HEK293 (cell line): ENCODE measurements at regions of chr15 and their contacts with region 1.

Region 1: GRCh38 chr15:79596051-79596507 is 163.9 kb downstream of the MINAR1 start:
- H3K4me3 ChIP-seq: no peak overlapping the region
- H3K27ac ChIP-seq: no peak overlapping the region
- H3K4me1 ChIP-seq: no peaks in the 10 kb centered on the region
- CTCF ChIP-seq: peak; percentile 84

Region 2: GRCh38 chr15:79364571-79365240 is 231.4 kb before region 1 on chr15:
- CTCF ChIA-PET with region 1: interaction called, 16 read pairs
- POLR2A ChIA-PET with region 1: no interaction called
- H3K4me3 ChIP-seq: no peak overlapping the region
- H3K27ac ChIP-seq: no peak overlapping the region
- H3K4me1 ChIP-seq: no peaks in the 10 kb centered on the region
- CTCF ChIP-seq: no peak

Region 3: DNA sequence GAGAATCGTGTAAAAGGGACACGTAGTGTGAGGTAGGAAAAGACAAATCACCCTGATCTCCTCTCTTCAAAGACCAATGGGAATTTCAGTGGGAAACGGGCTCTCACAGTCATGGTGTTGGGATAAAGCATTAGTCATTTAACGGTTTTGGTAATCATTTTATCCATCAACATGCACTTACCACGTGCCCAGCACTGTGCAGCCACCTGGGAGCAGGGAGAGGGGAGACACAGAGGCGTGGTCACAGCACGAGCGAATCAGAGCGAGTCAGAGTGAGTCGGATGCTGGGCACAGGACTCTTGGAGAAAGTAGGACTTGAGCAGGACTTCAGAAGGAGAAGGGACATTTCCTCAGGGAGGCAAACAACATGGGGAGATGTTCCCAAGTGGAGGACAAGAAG is 33.2 kb before region 1 on chr15:
- CTCF ChIA-PET with region 1: interaction called, 17 read pairs
- POLR2A ChIA-PET with region 1: no interaction called
- H3K4me3 ChIP-seq: no peak overlapping the region
- H3K27ac ChIP-seq: no peak overlapping the region
- H3K4me1 ChIP-seq: no peaks in the 10 kb centered on the region
- CTCF ChIP-seq: no peak

Region 4: GRCh38 chr15:79582650-79583049 is 13.4 kb before region 1 on chr15:
- CTCF ChIA-PET with region 1: interaction called, 20 read pairs
- POLR2A ChIA-PET with region 1: no interaction called
- H3K4me3 ChIP-seq: no peak overlapping the region
- H3K27ac ChIP-seq: no peak overlapping the region
- H3K4me1 ChIP-seq: no peaks in the 10 kb centered on the region
- CTCF ChIP-seq: no peak

Region 5: GRCh38 chr15:79615754-79616153 is 19.7 kb after region 1 on chr15:
- CTCF ChIA-PET with region 1: interaction called, 12 read pairs
- POLR2A ChIA-PET with region 1: no interaction called
- H3K4me3 ChIP-seq: no peak overlapping the region
- H3K27ac ChIP-seq: no peak overlapping the region
- H3K4me1 ChIP-seq: no peaks in the 10 kb centered on the region
- CTCF ChIP-seq: no peak

Region 6: GRCh38 chr15:79640206-79640605 is 44.1 kb after region 1 on chr15:
- CTCF ChIA-PET with region 1: interaction called, 10 read pairs
- POLR2A ChIA-PET with region 1: no interaction called
- H3K4me3 ChIP-seq: no peak overlapping the region
- H3K27ac ChIP-seq: no peak overlapping the region
- H3K4me1 ChIP-seq: no peaks in the 10 kb centered on the region
- CTCF ChIP-seq: no peak